ENCODE measurements at regions of chr11 and their contacts with region 1.

Region 1: DNA sequence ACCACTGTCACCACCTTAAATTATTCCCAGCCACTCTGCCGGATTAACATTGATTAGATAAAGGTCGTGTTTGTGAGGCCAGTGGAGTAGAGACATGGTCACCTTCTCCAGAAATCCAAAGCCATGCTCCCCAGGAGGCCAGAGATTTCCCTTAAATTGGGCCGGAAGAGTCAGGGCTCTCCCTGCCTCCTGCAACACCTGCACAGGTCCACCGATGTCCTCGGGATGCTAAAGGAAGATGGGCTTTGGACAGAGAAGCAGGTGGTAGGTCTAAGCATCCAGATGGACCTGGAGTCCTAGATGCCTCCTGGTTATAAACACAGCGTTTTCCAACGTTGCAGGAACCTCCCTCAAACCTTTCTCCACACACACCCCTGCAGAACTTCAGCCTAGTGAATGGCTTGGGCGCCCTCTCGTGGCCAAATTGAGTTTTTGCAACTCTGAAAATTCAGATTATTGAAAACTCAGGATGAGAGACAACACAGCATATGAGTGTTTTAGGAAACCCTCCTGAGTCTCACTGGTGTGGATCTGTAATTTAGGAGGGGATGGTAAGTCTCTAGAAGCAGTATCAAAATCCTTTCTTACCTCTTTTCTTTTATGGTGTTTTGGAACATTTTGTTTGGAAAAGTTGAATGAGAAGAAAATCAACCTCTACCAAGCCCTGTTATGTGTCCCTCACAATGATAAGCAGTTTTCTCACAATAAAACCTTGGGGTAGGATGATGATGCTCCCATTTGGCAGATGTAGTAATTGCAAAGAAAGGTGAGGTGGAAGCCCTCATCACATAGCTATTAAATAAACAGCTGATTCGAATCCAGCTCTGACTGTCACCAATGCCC is 109.6 kb downstream of the RRAS2 start:
- DNase-seq: peak; percentile 82
- ATAC-seq: peak; percentile 73
- H3K4me3 Mint-ChIP-seq: no peak overlapping the region
- H3K27ac Mint-ChIP-seq: no peak overlapping the region
- H3K4me1 Mint-ChIP-seq: peaks cover 18% of the 10 kb centered on the region
- H3K27me3 Mint-ChIP-seq: no peaks in the 10 kb centered on the region

Region 2: GRCh38 chr11:12478743-12479142 is 1770.6 kb before region 1 on chr11:
- CTCF ChIA-PET with region 1: no interaction called
- POLR2A ChIA-PET with region 1: no interaction called
- intact Hi-C with region 1: no loop called
- DNase-seq: no peak
- ATAC-seq: no peak
- H3K4me3 Mint-ChIP-seq: no peak overlapping the region
- H3K27ac Mint-ChIP-seq: no peak overlapping the region
- H3K4me1 Mint-ChIP-seq: no peaks in the 10 kb centered on the region
- H3K27me3 Mint-ChIP-seq: no peaks in the 10 kb centered on the region

Region 3: GRCh38 chr11:13486926-13487660 is 762.2 kb before region 1 on chr11:
- CTCF ChIA-PET with region 1: no interaction called
- POLR2A ChIA-PET with region 1: no interaction called
- intact Hi-C with region 1: loop called in 1 of 2 experiments (anchors 2 kb)
- DNase-seq: peak; percentile 80
- ATAC-seq: peak; percentile 93
- H3K4me3 Mint-ChIP-seq: peak overlapping the region; percentile 50
- H3K27ac Mint-ChIP-seq: peak overlapping the region; percentile 71
- H3K4me1 Mint-ChIP-seq: peaks cover 4% of the 10 kb centered on the region
- H3K27me3 Mint-ChIP-seq: peaks cover 1% of the 10 kb centered on the region

Region 4: GRCh38 chr11:13701506-13701905 is 547.8 kb before region 1 on chr11:
- CTCF ChIA-PET with region 1: no interaction called
- POLR2A ChIA-PET with region 1: no interaction called
- intact Hi-C with region 1: no loop called
- DNase-seq: no peak
- ATAC-seq: no peak
- H3K4me3 Mint-ChIP-seq: no peak overlapping the region
- H3K27ac Mint-ChIP-seq: no peak overlapping the region
- H3K4me1 Mint-ChIP-seq: no peaks in the 10 kb centered on the region
- H3K27me3 Mint-ChIP-seq: no peaks in the 10 kb centered on the region

Region 5: GRCh38 chr11:13772223-13773046 is 476.9 kb before region 1 on chr11:
- CTCF ChIA-PET with region 1: interaction called, 25 read pairs
- POLR2A ChIA-PET with region 1: no interaction called
- intact Hi-C with region 1: loop called (anchors 1 kb)
- DNase-seq: no peak
- ATAC-seq: peak; percentile 74
- H3K4me3 Mint-ChIP-seq: no peak overlapping the region
- H3K27ac Mint-ChIP-seq: no peak overlapping the region
- H3K4me1 Mint-ChIP-seq: no peaks in the 10 kb centered on the region
- H3K27me3 Mint-ChIP-seq: peaks cover 3% of the 10 kb centered on the region

Region 6: GRCh38 chr11:13955971-13956421 is 293.3 kb before region 1 on chr11:
- CTCF ChIA-PET with region 1: interaction called, 35 read pairs
- POLR2A ChIA-PET with region 1: no interaction called
- intact Hi-C with region 1: loop called (anchors 1 kb)
- DNase-seq: peak; percentile 71
- ATAC-seq: peak; percentile 58
- H3K4me3 Mint-ChIP-seq: no peak overlapping the region
- H3K27ac Mint-ChIP-seq: no peak overlapping the region
- H3K4me1 Mint-ChIP-seq: no peaks in the 10 kb centered on the region
- H3K27me3 Mint-ChIP-seq: peaks cover 13% of the 10 kb centered on the region

Measured in activated CD4-positive, alpha-beta T cell treated with anti-CD3 and anti-CD28 coated beads for 36 hours (primary cell).